ENCODE measurements at regions of chr13 and their contacts with region 1.

Region 1: DNA sequence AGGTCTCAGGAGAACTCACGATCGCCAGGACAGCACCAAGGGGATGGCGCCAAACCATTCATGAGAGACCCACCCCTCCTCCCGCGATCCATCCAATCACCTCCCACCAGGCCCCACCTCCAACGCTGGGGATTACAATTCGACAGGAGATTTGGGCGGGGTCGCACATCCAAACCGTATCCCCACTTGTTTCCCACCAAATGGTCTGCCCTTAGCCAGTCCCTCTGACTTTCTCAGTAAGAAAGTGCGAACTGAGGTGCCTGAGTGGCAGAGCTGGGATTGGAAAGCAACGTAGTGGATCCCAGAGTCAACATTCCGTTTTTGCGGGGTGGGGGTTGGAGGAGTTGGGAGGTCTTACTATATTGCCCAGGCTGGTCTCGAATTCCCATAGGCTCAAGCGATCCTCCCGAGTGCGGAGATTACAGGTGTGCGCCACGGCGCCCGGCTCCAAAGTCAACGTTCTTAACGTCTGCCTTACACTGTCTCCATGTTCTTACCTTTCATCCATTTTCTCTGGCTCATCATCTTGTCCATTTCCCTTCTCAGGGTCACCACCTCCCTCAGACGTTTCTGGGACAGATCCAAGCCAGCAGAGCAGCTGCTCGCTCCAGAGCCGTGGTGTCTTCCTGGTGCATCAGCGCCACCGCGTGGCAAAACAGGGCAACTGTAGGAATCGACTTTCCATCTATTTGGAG is 102.7 kb upstream of the ABCC4 start:
- DNase-seq: peak; percentile 73
- ATAC-seq: peak; percentile 86
- H3K4me3 ChIP-seq: peak overlapping the region; percentile 41
- H3K27ac ChIP-seq: no peak overlapping the region
- H3K4me1 ChIP-seq: peaks cover 3% of the 10 kb centered on the region; the same call in 1 of the 2 replicates
- H3K27me3 ChIP-seq: no peaks in the 10 kb centered on the region; the same call in 1 of the 2 replicates
- CTCF ChIP-seq: peak; percentile 97
- POLR2A ChIP-seq: peak; percentile 50
- RAD21 ChIP-seq: peak; percentile 98

Region 2: DNA sequence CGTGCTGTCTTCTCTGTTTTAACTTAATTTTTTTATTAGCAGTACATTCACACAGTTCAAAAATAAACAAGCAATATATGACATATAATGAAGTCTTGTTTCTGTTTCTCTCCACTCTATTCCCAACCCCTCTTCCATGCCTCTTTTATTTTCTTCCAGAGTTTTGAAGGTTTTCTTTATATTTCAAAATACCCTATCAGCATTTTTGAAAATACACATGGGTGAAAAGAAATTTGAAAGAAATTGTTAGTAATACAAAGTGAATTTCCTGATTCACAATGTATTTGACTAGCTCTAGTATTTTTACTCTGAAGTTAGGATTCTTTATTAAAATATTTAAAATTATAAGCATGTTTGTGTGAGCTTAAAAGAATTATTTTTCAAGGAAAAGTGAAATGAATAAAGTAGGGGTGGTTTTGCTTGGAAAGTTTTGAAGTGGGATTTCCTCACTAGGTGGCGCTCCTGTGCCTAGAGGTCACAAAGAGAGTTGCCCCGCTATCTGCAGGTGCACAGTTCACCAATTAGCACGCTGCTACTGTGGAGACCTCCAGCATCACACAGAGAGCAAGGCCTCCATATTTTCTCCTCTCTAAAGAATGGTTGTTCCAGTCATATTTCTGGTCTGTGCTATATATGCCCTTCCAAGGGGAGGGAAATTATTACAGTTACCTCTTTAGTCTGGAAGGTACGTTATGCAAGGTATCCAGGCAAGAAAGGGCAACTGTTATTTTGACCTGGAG is 729.2 kb before region 1 on chr13:
- CTCF ChIA-PET with region 1: interaction called, 4 read pairs
- POLR2A ChIA-PET with region 1: no interaction called
- dilution Hi-C with region 1: no loop called
- in situ Hi-C with region 1: loop called (anchors 25 kb)
- intact Hi-C with region 1: loop called (anchors 5 kb)
- DNase-seq: peak; percentile 30
- ATAC-seq: no peak; the same call in 1 of the 2 replicates
- H3K4me3 ChIP-seq: no peak overlapping the region
- H3K27ac ChIP-seq: no peak overlapping the region
- H3K4me1 ChIP-seq: no peaks in the 10 kb centered on the region
- H3K27me3 ChIP-seq: peaks cover 16% of the 10 kb centered on the region
- CTCF ChIP-seq: peak; percentile 50
- POLR2A ChIP-seq: no peak
- RAD21 ChIP-seq: peak; percentile 46

Region 3: GRCh38 chr13:94710881-94711560 is 693.0 kb before region 1 on chr13:
- CTCF ChIA-PET with region 1: no interaction called
- POLR2A ChIA-PET with region 1: no interaction called
- dilution Hi-C with region 1: no loop called
- in situ Hi-C with region 1: no loop called
- intact Hi-C with region 1: loop called (anchors 10 kb)
- DNase-seq: no peak
- ATAC-seq: peak; percentile 74
- H3K4me3 ChIP-seq: no peak overlapping the region
- H3K27ac ChIP-seq: no peak overlapping the region
- H3K4me1 ChIP-seq: peaks cover 3% of the 10 kb centered on the region; the same call in 1 of the 2 replicates
- H3K27me3 ChIP-seq: peaks cover 82% of the 10 kb centered on the region
- CTCF ChIP-seq: 0 out of 2 replicates have a peak, but pooled peaks have one; percentile 20
- POLR2A ChIP-seq: no peak
- RAD21 ChIP-seq: no peak

Region 4: DNA sequence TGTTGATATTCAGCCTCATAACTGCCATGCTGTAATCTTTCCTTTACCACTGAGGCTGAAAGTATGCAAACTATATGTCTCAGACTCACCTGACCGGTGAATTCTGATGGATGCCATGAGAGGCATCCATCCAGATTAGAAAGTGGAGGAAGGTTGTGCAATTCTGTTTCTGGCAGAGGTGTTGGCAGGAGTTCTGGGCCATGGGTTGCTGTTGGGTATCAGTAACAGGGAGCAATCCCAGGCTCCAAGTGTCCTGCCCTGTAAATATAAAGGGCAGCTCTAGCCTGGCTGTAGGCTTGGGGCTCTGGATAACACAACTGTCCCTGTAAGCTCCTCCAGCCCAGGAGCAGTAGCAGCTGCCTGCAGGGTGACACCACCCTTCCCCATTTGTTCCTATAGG is 25.4 kb before region 1 on chr13:
- CTCF ChIA-PET with region 1: interaction called, 7 read pairs
- POLR2A ChIA-PET with region 1: no interaction called
- dilution Hi-C with region 1: no loop called
- in situ Hi-C with region 1: no loop called
- intact Hi-C with region 1: loop called (anchors 2 kb)
- DNase-seq: no peak
- ATAC-seq: no peak
- H3K4me3 ChIP-seq: no peak overlapping the region
- H3K27ac ChIP-seq: no peak overlapping the region
- H3K4me1 ChIP-seq: peaks cover 3% of the 10 kb centered on the region; the same call in 1 of the 2 replicates
- H3K27me3 ChIP-seq: peaks cover 3% of the 10 kb centered on the region; the same call in 1 of the 2 replicates
- CTCF ChIP-seq: no peak
- POLR2A ChIP-seq: no peak
- RAD21 ChIP-seq: no peak